ENCODE measurements at regions of chr7 and their contacts with region 1.

Region 1: DNA sequence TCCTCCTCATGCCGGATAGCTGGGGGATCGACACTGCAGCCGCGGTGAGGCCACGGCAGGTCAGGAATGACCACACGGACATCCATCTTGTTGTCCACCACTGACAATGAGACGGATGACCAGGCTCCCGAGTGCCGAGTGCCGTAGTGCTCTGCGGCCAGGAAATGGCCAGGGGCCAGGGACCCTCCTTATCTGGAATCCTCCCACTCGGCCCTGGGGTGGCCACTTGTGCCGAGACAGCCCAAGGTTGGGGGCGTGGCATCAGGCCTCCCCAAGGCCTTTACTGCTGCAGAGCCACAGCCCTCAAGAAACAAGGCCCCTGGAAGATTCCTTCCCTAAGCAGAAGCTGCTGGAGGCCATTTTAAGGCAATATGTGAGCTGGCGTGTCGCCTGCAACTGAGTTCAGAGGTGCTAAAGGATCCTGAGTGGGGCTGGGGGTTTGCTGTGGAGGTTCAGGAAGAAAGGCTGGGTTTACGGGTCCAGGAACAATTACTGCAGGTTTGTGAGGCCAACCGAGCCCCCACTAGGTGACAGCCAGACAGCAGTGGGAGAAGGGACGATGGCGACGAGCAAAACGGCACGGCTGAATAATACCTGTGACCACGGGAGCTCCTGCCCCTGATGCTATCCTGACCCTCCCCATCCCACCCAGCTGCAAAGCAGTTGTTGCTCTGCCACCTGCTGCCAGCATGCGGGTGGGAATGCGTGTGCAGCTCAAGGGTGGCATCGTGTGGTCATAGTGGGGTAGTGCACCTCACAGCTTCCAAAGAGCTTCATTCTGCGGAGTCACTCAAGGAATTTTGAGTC is 31.6 kb upstream of the LEP start:
- DNase-seq: peak; percentile 86

Region 2: GRCh38 chr7:127708788-127709187 is 500.6 kb before region 1 on chr7:
- intact Hi-C with region 1: loop called (anchors 2 kb)
- DNase-seq: no peak

Region 3: DNA sequence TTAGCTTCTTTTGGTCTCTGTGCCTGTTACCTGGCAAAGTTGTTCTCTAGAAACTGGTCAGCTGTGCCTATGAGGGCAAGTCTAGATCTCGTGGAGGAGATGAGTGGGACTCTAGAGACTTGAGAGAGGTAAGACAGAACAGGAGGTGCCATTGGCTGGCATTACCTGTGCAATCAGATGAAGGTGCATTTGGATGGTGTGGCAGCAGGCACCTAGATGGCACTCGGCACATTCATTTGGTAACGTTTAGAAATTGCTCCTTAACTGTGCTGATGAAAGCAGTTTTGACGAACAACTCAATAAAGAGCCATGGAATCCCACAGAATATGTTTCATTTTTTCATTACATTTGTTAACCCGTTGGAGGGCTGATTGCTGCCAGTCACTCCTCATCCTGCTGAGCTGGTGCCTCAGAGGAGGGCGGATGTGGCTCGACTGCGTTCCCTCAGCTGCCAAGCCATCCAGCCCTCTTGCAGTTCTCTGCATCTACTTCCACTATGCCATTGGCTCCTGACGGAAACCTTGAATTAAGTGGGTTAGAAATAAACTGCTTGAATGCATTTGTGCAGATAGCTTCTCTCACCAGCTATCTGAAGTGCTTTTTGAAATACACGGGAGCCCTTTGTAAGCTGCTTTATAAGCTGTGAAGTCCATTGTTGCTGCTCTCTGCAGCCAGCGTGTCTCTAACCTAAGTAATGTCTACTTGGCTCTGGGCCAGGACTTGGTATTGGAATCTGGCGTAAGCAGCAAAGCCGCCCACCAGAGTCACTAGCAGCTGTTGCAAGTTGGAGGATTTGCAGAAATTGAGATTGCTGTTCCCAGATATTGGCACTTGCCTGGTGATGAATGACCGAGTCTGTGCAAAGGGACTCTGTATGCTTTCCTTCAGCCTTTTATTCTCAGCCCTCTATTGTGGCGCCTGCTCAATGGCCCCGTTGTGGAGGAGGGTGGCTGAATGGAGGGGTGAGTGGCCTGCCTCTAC is 265.6 kb before region 1 on chr7:
- intact Hi-C with region 1: loop called (anchors 10 kb)
- DNase-seq: no peak

Region 4: DNA sequence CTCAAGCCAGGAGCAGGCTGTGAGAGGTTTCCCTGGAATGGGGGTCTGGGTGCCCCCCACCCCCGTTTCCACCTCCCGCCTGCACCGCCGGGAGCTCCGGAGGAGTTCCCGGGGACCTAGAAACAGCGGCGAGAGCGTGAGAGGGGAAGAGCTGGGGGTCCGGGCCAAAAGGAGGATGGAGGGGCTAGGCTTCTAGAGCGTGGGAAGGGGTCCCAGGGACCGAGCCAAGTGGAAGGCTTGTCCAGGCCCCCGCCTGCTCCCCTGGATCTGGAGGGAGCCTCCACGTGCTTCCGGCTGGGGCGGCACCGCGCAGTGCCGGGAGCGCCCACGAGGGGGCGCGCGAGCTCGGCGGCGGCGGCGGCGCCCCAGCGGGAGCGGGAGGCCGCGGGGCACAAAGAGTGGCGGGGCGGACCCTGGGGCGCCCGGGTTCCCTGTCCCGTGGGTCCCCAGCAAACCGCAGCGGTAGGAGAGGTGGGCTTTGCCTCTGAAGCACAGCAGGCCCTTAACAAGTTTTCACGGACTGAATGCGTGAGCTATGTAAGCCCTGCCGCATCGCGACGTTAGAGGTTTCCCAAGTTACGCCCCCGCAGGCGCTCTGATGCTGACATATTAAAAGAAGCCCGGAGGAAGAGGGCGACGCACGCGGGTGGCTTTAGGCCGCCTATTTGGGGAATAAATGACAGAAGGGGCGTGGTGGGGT is 73.8 kb before region 1 on chr7:
- intact Hi-C with region 1: loop called (anchors 1 kb)
- DNase-seq: no peak

Region 5: DNA sequence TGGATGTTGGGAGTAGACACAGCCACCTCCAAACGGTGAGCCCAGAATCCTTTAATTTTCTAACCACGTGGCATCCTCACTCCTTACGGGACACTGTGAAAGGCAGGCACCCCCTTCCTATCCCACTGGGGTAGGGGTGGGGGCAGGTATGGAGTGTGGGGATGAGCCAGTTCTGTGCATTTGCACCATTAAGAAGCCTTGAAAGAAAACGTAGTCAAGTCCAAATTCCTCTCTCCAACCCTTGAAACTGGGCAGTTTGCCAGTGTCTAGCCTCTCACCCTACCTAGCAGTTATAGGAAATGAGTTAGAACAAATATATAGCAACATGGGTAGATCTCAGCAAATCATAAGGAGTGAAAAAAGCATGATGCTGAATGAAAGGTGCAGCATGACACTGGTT is 60.8 kb before region 1 on chr7:
- intact Hi-C with region 1: no loop called
- DNase-seq: no peak

Measured in cardiac septum (tissue), 1 donor.